ENCODE measurements at regions of chr2 and their contacts with region 1.

Region 1: GRCh38 chr2:135797497-135798274 is 39.3 kb downstream of the LCT start:
- DNase-seq: peak; percentile 19
- H3K4me3 ChIP-seq: no peak overlapping the region
- H3K27me3 ChIP-seq: no peaks in the 10 kb centered on the region
- CTCF ChIP-seq: peak; percentile 96

Region 2: DNA sequence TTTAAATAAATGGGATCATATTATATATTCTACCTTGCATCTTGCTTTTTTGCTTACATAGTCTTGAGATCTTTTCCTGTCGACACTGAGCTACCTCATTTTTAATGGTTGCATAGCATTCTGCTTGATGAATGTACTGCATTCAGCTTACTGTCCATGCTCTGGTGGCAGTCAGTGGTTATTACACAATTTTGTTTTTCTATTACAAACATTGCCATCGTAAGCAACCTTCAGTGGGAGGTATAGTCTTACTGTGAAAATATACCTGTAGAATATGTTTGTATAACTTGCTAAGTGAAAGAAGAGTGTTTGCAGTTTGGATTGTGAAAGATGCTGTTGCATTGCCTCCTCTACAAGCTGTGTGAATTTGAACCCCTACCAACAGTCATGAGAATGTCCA is 12.7 kb before region 1 on chr2:
- CTCF ChIA-PET with region 1: interaction called, 39 read pairs
- POLR2A ChIA-PET with region 1: no interaction called
- DNase-seq: no peak
- H3K4me3 ChIP-seq: no peak overlapping the region
- H3K27me3 ChIP-seq: no peaks in the 10 kb centered on the region
- CTCF ChIP-seq: 0 out of 2 replicates have a peak, but pooled peaks have one; percentile 18

Region 3: GRCh38 chr2:135815269-135815668 is 17.6 kb after region 1 on chr2:
- CTCF ChIA-PET with region 1: interaction called, 44 read pairs
- POLR2A ChIA-PET with region 1: no interaction called
- DNase-seq: no peak
- H3K4me3 ChIP-seq: no peak overlapping the region
- H3K27me3 ChIP-seq: no peaks in the 10 kb centered on the region
- CTCF ChIP-seq: no peak

Region 4: DNA sequence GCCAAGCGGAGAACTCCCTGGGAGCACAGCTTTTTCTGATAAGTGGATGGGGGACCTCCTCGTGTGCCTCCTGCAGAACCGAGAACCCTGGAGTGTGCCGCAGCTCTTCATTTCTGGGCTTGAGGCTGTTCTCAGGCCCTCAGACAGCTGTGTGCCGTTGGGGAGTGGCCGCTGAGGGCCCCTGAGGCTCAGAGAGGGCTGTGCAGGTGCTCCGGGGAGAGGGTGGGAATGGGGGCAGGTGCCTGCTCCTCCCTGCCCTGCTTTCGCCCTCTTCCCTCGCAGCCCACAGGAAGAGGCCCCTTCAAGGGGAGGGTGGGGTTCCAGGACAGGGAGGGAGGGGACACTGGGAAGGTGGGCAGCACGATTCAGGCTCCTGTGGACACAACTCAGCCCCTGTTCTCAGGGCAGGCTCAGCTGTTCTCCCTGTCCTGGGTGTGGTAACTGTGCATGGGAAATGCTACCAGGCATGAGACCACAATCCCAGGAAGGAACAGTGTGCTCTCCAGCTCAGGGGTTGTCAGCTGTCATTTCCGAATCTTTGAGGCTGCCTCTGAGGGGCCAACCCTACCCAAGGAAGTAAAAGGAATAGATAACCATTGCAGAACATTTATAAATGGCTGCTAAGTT is 28.0 kb after region 1 on chr2:
- CTCF ChIA-PET with region 1: interaction called, 24 read pairs
- POLR2A ChIA-PET with region 1: no interaction called
- DNase-seq: no peak
- H3K4me3 ChIP-seq: no peak overlapping the region
- H3K27me3 ChIP-seq: no peaks in the 10 kb centered on the region
- CTCF ChIP-seq: no peak